Psoas muscle (tissue), 8 donors: ENCODE measurements at regions of chr1 and their contacts with region 1.

Region 1: GRCh38 chr1:183635606-183636333 is at the start of gene ARPC5:
- DNase-seq: peak; percentile 95 to 98
- ATAC-seq: peak; percentile 97
- H3K4me3 ChIP-seq: peak within 1 kb of the TSS; percentile 90
- H3K27ac ChIP-seq: peak within 1 kb of the TSS; percentile 87
- H3K4me1 ChIP-seq: peaks cover 28% of the 10 kb centered on the region
- H3K27me3 ChIP-seq: no peaks in the 10 kb centered on the region
- CTCF ChIP-seq: no peak
- total RNA-seq, gene ARPC5: 11.6 to 17.1 (median 12.7) TPM

Region 2: DNA sequence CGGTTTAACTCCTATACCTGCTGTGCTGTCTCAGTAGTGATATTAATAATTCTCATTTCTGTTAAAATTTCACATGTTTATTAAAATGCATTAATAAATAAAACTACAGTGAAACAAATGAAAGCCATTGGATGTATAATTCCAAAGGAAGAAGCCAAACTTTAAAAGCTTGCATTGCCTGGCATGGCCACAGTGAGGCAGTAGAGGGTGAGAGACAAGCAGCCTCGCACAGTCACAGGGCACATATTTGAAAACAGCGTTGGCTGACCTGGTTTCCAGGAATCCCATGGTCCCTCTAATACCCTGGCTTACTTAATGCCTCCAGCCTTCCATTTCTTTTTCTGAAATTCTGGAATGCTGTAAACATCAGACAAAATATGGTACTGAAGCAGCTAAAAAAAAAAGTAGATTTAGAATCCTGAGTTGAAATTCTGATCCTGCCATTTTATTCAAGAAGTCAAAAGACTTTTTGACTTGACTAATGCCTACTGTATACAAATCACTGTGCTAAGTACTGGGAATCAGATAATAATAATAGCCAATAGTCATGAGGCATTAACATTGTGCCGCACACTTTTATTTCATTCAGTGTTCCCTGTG is 1040.0 kb before region 1 on chr1:
- intact Hi-C with region 1: loop called in 1 of 2 experiments (anchors 10 kb)
- DNase-seq: peak; percentile 68 to 77
- ATAC-seq: peak; percentile 76 to 89 (median 84)
- H3K4me3 ChIP-seq: no peak overlapping the region
- H3K27ac ChIP-seq: no peak overlapping the region
- H3K4me1 ChIP-seq: peaks cover 8% of the 10 kb centered on the region
- H3K27me3 ChIP-seq: no peaks in the 10 kb centered on the region
- CTCF ChIP-seq: peak; percentile 81

Region 3: GRCh38 chr1:183515018-183515689 is 120.6 kb before region 1 on chr1:
- intact Hi-C with region 1: no loop called
- DNase-seq: no peak
- ATAC-seq: no peak
- H3K4me3 ChIP-seq: no peak overlapping the region
- H3K27ac ChIP-seq: no peak overlapping the region
- H3K4me1 ChIP-seq: peaks cover 3% of the 10 kb centered on the region
- H3K27me3 ChIP-seq: no peaks in the 10 kb centered on the region
- CTCF ChIP-seq: no peak